Activated CD4-positive, alpha-beta memory T cell treated with anti-CD3 and anti-CD28 coated beads for 36 hours (primary cell): ENCODE measurements at regions of chr12 and their contacts with region 1.

Region 1: GRCh38 chr12:110431957-110432587 is 18.1 kb downstream of the ARPC3 start:
- DNase-seq: peak; percentile 57
- H3K4me3 Mint-ChIP-seq: no peak overlapping the region
- H3K27ac Mint-ChIP-seq: no peak overlapping the region
- H3K4me1 Mint-ChIP-seq: peaks cover 10% of the 10 kb centered on the region
- H3K27me3 Mint-ChIP-seq: no peaks in the 10 kb centered on the region

Region 2: DNA sequence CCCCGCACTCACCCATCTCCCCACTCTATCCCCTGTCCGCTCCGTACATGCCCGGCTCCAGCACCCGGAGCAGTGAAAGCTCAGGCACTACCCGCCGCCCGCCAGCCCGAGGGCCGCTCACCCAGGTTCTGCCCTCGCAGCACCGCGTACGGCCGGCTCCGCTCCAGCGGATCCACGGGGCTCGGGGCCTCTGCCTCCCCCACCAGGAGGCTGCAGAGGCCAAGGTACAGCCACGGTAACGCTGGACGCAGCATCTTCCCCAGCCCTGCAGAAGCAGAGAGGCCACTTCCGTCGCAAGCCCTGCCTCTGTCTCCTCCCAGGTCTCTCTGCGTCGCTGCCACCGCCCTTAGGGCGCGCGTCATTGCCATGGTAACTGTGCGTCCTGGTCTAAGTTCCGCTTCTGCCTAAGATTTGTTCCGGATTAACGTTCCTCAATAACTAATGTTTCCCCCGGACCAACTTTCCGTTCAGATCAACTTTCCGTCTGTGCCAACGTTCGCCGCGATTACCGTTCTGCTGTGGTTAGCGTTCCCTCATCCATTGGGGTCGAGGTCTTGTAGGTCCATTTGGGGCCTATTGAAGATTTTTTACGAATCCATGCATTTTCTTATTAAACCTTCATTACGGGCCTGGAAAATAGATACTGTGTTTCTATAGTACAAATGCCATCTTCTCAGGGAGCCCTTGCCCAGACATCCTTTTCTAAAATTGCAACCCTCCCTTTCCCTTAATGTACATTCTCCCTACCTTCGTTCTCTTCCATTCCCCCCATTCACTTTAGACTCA is 383.6 kb before region 1 on chr12 and contains the start of gene C12orf76:
- CTCF ChIA-PET with region 1: interaction called, 4 read pairs
- POLR2A ChIA-PET with region 1: no interaction called
- intact Hi-C with region 1: loop called (anchors 1 kb)
- DNase-seq: peak; percentile 95
- H3K4me3 Mint-ChIP-seq: peak within 1 kb of the TSS; percentile 89
- H3K27ac Mint-ChIP-seq: peak within 1 kb of the TSS; percentile 94
- H3K4me1 Mint-ChIP-seq: peaks cover 38% of the 10 kb centered on the region
- H3K27me3 Mint-ChIP-seq: no peaks in the 10 kb centered on the region
- total RNA-seq, gene C12orf76: 14.2 to 17.1 TPM

Region 3: GRCh38 chr12:110280779-110281548 is 151.1 kb before region 1 on chr12 and contains the start of gene ATP2A2:
- CTCF ChIA-PET with region 1: interaction called, 18 read pairs
- POLR2A ChIA-PET with region 1: interaction called, 5 read pairs
- intact Hi-C with region 1: loop called (anchors 5 kb)
- DNase-seq: peak; percentile 92
- H3K4me3 Mint-ChIP-seq: peak within 1 kb of the TSS; percentile 90
- H3K27ac Mint-ChIP-seq: peak within 1 kb of the TSS; percentile 87
- H3K4me1 Mint-ChIP-seq: peaks cover 35% of the 10 kb centered on the region
- H3K27me3 Mint-ChIP-seq: no peaks in the 10 kb centered on the region
- total RNA-seq, gene ATP2A2: 144 to 152 TPM

Region 4: GRCh38 chr12:110355073-110355472 is 77.0 kb before region 1 on chr12:
- CTCF ChIA-PET with region 1: interaction called, 29 read pairs
- POLR2A ChIA-PET with region 1: no interaction called
- intact Hi-C with region 1: loop called (anchors 1 kb)
- DNase-seq: peak; percentile 56
- H3K4me3 Mint-ChIP-seq: no peak overlapping the region
- H3K27ac Mint-ChIP-seq: no peak overlapping the region
- H3K4me1 Mint-ChIP-seq: peaks cover 16% of the 10 kb centered on the region
- H3K27me3 Mint-ChIP-seq: no peaks in the 10 kb centered on the region

Region 5: DNA sequence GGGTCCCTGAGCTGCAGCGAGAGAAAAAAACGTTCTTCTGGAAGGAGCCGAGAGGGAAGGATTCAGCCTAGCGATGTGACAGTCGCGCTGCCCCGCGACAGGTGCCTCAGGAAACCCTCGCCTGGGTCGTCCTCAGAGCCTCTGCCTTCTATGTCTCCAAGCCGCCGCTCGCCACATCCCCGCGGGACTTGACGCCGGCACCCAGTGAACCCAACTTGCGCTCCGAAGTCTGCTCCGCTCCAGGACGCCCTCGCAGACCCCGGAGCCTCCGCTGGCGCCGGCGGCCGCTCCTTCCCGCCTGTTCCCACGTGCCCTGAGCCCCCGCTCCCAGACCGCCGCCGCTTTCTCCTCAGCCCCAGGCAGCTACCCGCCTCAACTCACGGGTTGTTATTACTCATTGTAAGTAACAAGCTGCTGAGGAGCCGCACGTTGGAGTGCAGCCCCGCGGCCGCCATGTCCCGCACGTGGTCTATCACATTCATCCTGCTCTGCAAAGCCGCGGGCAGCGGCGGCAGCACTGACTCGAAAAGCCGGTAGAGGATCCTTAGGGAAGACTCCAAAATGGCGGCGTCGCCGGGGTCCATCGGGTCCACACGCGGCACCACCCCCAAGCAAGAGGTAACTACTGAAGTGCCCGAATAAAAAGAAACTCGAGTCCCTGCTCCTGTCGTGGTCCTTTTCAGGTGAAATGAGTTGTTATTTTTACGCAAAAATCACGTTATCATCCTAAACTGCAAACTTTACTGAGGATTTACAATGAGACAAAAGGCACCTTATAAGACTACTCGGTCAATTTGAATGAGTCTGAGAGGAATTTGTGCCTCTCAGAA is 28.7 kb before region 1 on chr12 and contains the start of gene ANAPC7:
- CTCF ChIA-PET with region 1: interaction called, 24 read pairs
- POLR2A ChIA-PET with region 1: interaction called, 9 read pairs
- intact Hi-C with region 1: loop called (anchors 1 kb)
- DNase-seq: peak; percentile 92
- H3K4me3 Mint-ChIP-seq: peak within 1 kb of the TSS; percentile 99
- H3K27ac Mint-ChIP-seq: peak within 1 kb of the TSS; percentile 99
- H3K4me1 Mint-ChIP-seq: peaks cover 23% of the 10 kb centered on the region
- H3K27me3 Mint-ChIP-seq: no peaks in the 10 kb centered on the region
- total RNA-seq, gene ANAPC7: 47.3 to 52.9 TPM

Region 6: DNA sequence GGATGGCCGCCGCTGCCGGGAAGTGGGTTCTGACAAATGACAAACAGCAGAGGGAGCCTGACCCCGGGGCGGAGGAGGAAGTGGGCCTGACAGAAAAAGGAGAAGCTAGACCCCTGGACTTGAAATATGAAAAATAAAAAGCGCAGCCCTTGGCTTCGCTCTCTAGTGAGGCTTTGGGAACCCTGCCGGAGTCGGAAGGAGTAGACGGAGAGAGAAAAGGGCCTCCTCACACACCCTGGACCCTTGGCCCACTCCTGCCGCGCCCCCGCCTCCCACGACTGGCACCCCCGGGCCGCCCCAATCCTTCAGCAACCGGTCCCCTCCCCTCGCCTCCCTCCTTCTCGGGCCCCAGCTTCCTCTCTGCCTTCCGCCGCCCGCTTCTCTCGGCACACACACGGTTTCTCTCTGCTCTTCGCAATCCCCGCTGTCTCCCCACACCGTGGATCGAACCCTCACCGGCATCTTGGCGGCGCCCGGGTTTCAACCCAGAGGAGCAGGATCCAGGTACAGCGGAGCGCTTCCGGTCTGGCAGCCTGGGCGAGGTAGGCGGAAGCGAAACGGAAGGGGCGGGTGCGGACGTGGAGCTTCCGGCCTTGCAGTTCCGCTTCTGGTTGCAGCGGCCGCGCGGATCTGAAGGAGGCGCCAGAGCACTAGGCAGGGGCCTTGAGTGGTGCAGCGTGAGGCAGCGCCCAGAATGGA is 17.9 kb after region 1 on chr12 and contains the start of gene ARPC3:
- CTCF ChIA-PET with region 1: interaction called, 56 read pairs
- POLR2A ChIA-PET with region 1: interaction called, 12 read pairs
- intact Hi-C with region 1: no loop called
- DNase-seq: peak; percentile 97
- H3K4me3 Mint-ChIP-seq: peak within 1 kb of the TSS; percentile 100
- H3K27ac Mint-ChIP-seq: peak within 1 kb of the TSS; percentile 99
- H3K4me1 Mint-ChIP-seq: peaks cover 35% of the 10 kb centered on the region
- H3K27me3 Mint-ChIP-seq: no peaks in the 10 kb centered on the region
- total RNA-seq, gene ARPC3: 340 to 352 TPM